ENCODE measurements at regions of chr14 and their contacts with region 1.

Region 1: GRCh38 chr14:103576371-103577024 is 13.7 kb downstream of the COA8 start:
- DNase-seq: peak; percentile 97
- H3K4me3 ChIP-seq: no peak overlapping the region
- H3K27ac ChIP-seq: peak overlapping the region; percentile 82 to 86 (median 84)
- H3K4me1 ChIP-seq: peaks cover 0 to 24% (median 23%) of the 10 kb centered on the region in 4 donors
- H3K27me3 ChIP-seq: no peaks in the 10 kb centered on the region
- CTCF ChIP-seq: no peak
- EP300 ChIP-seq: peak in 2 of 4 donors; percentile 44 to 73
- POLR2A ChIP-seq: no peak

Region 2: GRCh38 chr14:103628684-103629502 is 52.4 kb after region 1 on chr14 and contains the start of gene KLC1:
- intact Hi-C with region 1: loop called (anchors 2 kb)
- DNase-seq: peak; percentile 93
- H3K4me3 ChIP-seq: peak within 1 kb of the TSS; percentile 78 to 96 (median 86)
- H3K27ac ChIP-seq: peak within 1 kb of the TSS; percentile 97 to 100 (median 100)
- H3K4me1 ChIP-seq: peaks cover 0 to 70% (median 60%) of the 10 kb centered on the region in 4 donors
- H3K27me3 ChIP-seq: no peaks in the 10 kb centered on the region
- CTCF ChIP-seq: no peak
- EP300 ChIP-seq: peak in 1 of 4 donors; percentile 17
- POLR2A ChIP-seq: peak; percentile 70 to 74
- total RNA-seq, gene KLC1: 216 to 399 (median 277) TPM

Region 3: GRCh38 chr14:103696466-103697071 is 120.1 kb after region 1 on chr14:
- intact Hi-C with region 1: loop called (anchors 5 kb)
- DNase-seq: peak; percentile 90
- H3K4me3 ChIP-seq: no peak overlapping the region
- H3K27ac ChIP-seq: peak overlapping the region; percentile 75 to 81 (median 77)
- H3K4me1 ChIP-seq: peaks cover 0 to 49% (median 41%) of the 10 kb centered on the region in 4 donors
- H3K27me3 ChIP-seq: no peaks in the 10 kb centered on the region
- CTCF ChIP-seq: no peak
- EP300 ChIP-seq: no peak
- POLR2A ChIP-seq: no peak

Region 4: DNA sequence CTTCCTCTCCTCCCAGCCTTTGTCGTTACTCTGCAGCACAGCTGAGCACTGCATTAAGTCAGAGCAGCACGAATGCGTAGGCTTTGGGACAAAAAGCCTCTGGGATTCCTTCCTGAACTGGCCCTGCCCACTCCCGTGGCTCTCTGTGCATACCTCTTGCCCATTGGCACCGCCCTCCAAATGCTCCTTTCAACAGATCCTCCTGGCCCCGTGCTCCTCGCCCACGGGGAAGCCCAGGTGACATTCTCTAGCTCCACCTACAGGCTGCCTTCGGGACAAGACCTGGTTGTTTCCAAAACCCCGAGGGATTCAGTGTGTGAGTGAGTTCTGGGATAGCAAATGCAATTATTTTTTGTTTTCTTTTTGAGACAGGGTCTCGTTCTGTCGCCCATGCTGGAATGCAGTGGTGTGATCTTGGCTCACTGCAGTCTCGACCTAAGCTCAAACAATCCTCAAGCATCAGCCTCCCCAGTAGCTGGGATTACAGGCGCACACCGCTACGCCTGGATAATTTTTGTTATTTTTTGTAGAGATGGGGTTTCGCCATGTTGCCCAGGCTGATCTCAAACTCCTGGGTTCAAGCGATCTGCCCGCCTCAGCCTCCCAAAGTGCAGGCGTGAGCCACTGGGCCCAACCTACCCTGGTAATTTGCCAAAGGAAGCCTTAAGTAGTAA is 333.9 kb after region 1 on chr14:
- intact Hi-C with region 1: loop called (anchors 5 kb)
- DNase-seq: peak; percentile 89
- H3K4me3 ChIP-seq: peak overlapping the region in 1 of 4 donors; percentile 3
- H3K27ac ChIP-seq: peak overlapping the region; percentile 24 to 71 (median 36)
- H3K4me1 ChIP-seq: peaks cover 0 to 16% (median 8%) of the 10 kb centered on the region in 4 donors
- H3K27me3 ChIP-seq: no peaks in the 10 kb centered on the region
- CTCF ChIP-seq: peak; percentile 51 to 86 (median 70)
- EP300 ChIP-seq: no peak
- POLR2A ChIP-seq: no peak